ENCODE measurements at regions of chr3 and their contacts with region 1.

Region 1: DNA sequence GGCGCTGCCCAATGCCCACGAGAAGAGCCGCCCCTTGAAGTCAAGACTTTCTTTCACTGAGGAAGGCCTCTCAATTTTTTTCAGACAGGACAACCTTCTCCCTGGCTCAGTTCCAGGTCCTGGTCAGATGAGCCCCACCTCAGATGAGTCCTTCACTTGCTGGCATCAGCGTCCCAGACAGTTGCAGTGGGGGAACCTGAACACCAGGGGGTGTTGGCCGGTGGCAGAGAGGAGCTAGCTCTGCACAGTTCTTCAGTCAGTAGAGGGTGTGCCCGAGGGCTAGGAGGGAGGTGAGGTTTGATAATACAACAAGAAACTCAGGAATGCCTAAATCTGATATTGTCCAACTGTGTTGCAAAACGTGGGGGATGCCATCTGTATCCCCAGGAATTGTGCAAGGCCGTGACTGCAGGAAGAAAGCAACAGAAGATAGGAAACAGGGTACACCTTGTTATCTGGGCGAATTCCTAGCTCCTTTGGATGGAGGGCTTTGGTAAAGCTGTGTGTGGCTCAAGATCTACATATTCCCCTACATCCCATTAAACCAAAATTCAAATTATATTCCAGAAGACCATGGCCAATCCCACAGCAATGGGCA is 34.3 kb downstream of the CCR3 start:
- H3K4me3 Mint-ChIP-seq: no peak overlapping the region
- H3K27ac Mint-ChIP-seq: no peak overlapping the region
- H3K4me1 Mint-ChIP-seq: peaks cover 49% of the 10 kb centered on the region
- H3K27me3 Mint-ChIP-seq: no peaks in the 10 kb centered on the region

Region 2: GRCh38 chr3:46214751-46215352 is 61.7 kb before region 1 on chr3:
- intact Hi-C with region 1: loop called (anchors 5 kb)
- H3K4me3 Mint-ChIP-seq: no peak overlapping the region
- H3K27ac Mint-ChIP-seq: no peak overlapping the region
- H3K4me1 Mint-ChIP-seq: peaks cover 18% of the 10 kb centered on the region
- H3K27me3 Mint-ChIP-seq: no peaks in the 10 kb centered on the region

Region 3: DNA sequence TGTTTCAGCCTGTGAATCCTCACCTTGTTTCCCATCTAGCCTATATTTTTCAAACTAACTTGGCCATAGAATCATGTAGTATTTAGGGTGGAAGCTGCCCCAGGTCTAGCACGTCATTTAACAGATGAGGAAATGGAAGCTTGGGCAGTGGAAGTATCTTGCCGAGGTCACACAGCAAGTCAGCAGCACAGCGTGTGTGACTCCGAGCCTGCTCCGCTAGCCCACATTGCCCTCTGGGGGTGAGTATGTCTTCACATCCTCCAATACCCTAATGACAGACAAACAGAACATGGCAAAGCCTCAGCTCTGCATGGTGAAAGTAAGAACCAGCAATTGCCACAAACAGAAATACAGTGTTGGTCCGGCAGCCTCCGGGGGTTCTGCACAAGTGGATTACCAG is 92.0 kb after region 1 on chr3:
- intact Hi-C with region 1: loop called (anchors 2 kb)
- H3K4me3 Mint-ChIP-seq: peak overlapping the region; percentile 32
- H3K27ac Mint-ChIP-seq: peak overlapping the region; percentile 85
- H3K4me1 Mint-ChIP-seq: peaks cover 69% of the 10 kb centered on the region
- H3K27me3 Mint-ChIP-seq: no peaks in the 10 kb centered on the region

Region 4: DNA sequence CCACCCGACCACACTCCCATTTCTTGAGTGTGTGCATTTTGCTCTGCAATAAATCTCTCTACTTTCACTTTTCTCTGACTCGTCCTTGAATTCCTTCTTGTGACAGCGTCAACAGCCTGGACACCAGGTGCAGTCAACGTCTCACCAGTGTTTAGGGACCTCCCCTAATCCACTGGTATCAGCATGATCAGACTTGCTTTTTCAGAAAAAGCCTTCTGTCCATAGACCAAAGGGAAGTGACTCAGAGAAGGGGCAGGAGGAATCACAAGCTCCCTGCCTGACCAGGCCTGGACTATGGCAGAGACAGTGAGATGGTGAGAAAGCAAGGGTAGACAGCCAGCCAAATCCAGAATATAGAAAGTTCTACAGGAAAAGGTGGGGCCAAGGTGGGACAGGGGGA is 109.6 kb after region 1 on chr3:
- intact Hi-C with region 1: no loop called
- H3K4me3 Mint-ChIP-seq: no peak overlapping the region
- H3K27ac Mint-ChIP-seq: peak overlapping the region; percentile 42
- H3K4me1 Mint-ChIP-seq: peaks cover 35% of the 10 kb centered on the region
- H3K27me3 Mint-ChIP-seq: no peaks in the 10 kb centered on the region

Measured in dendritic cell treated with granulocyte-macrophage colony-stimulating factor and Interleukin-4, amounts not matched to agents 40 ng/mL and 50 ng/mL, for 4 days (primary cell).